ENCODE measurements at regions of chr7 and their contacts with region 1.

Region 1: GRCh38 chr7:18890134-18890533 is 227.3 kb downstream of the TWIST1 start:
- DNase-seq: peak; percentile 70
- H3K4me3 ChIP-seq: no peak overlapping the region
- H3K27ac ChIP-seq: no peak overlapping the region
- H3K4me1 ChIP-seq: peaks cover 21% of the 10 kb centered on the region
- H3K27me3 ChIP-seq: peaks cover 26% of the 10 kb centered on the region
- CTCF ChIP-seq: no peak

Region 2: DNA sequence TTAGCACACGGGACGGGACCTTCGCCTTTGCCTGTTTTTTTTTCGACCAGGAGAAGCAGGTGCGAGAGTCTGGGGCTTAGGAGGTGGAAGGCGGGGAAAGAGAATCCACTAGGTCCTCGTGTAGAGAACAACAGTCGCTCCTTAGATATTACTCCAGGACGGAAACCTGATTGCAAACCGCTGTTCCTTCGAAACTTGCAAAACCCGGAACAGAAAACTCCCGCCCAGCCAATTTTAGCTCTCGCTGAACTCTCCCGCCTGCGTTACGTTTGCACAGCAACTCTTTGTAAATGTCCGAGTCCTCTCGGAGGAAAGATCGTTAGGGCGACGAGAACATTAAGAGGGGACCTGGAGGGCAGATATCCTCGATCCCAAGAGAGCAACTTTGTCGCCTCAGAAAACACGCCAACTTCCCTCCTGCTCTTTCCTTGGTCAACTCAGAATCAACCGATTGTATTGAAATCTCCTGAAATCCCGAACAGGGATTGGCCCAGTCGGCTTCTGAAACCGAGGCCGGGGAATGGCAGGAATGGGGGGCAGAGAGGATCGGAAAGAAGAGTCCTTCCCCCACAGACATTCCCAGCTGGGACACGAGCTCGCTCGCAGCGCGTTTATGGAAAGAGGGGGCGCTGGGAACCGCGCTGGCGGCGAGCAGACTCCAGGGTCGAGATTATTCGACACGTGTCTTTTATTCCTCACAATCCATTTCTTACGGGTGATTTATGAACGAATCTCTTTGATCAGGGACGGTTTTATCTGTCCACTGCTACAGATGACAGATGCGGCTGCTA is 217.4 kb after region 1 on chr7:
- CTCF ChIA-PET with region 1: no interaction called
- POLR2A ChIA-PET with region 1: no interaction called
- intact Hi-C with region 1: loop called (anchors 5 kb)
- DNase-seq: peak; percentile 76
- H3K4me3 ChIP-seq: peak overlapping the region; percentile 43
- H3K27ac ChIP-seq: peak overlapping the region; percentile 15
- H3K4me1 ChIP-seq: peaks cover 25% of the 10 kb centered on the region
- H3K27me3 ChIP-seq: no peaks in the 10 kb centered on the region
- CTCF ChIP-seq: no peak